OCI-LY7 (cell line): ENCODE measurements at regions of chr2 and their contacts with region 1.

Region 1: DNA sequence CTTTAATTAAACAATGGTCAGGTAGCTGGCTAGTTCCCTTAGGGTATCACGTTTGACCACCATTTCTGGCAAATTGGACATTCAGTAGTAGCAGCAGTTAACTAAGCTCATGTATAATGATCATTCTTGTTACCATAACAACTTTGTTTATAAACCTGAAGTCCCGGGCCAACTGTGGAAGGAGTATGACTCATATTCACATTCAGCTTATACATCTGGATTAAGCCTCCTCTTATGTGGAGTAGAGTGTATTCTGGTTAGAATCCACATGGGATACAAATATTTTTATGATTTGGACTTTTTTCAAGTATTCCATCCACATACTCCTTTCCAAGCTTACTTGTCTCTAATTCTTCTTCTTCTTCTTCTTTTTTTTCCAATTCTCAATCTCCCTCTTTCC is 70.3 kb upstream of the ZSWIM2 start:
- DNase-seq: no peak
- H3K4me3 ChIP-seq: no peak overlapping the region
- H3K27ac ChIP-seq: no peak overlapping the region
- H3K4me1 ChIP-seq: no peaks in the 10 kb centered on the region
- CTCF ChIP-seq: no peak

Region 2: GRCh38 chr2:186201371-186201770 is 717.9 kb before region 1 on chr2:
- CTCF ChIA-PET with region 1: no interaction called
- POLR2A ChIA-PET with region 1: no interaction called
- intact Hi-C with region 1: no loop called
- DNase-seq: no peak
- H3K4me3 ChIP-seq: no peak overlapping the region
- H3K27ac ChIP-seq: no peak overlapping the region
- H3K4me1 ChIP-seq: no peaks in the 10 kb centered on the region
- CTCF ChIP-seq: no peak

Region 3: DNA sequence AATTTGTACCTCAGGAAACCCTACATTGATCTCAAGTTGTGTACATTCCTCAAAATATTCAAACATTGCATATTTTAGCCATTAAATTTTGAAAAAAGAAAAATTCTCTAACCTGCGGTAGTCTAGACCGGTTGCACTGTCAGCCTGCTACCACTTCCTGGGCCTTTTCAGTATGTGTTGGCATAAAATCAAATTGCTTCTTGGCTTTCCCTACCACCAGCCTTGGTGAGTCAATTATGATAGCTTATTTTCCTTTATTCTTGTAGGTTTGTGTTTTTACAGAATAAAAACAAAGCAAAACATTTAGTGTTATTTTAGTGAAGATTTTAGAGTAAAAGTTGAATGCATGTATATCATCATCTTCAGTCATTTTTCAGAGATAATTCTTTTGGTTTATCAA is 164.2 kb before region 1 on chr2:
- CTCF ChIA-PET with region 1: no interaction called
- POLR2A ChIA-PET with region 1: no interaction called
- intact Hi-C with region 1: no loop called
- DNase-seq: no peak
- H3K4me3 ChIP-seq: no peak overlapping the region
- H3K27ac ChIP-seq: no peak overlapping the region
- H3K4me1 ChIP-seq: no peaks in the 10 kb centered on the region
- CTCF ChIP-seq: no peak

Region 4: DNA sequence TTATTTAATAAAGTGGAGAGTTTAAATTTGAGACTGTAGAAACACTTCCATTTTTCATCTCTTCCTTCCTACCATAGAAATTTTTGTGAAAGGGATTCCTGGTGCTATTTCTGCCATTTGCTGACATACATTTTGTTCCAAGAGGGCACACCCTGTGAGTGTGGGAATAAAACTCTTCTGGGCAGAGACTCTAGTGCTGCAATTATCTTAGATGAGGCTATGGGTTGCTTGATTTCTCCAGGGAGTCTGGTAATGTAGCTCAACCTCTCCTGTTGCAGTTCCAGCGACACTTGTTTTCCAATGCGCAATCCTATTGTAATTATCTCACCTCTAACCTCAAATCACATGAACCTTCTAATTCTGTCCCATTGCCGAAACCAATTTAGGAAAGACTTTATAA is 10.2 kb before region 1 on chr2:
- CTCF ChIA-PET with region 1: no interaction called
- POLR2A ChIA-PET with region 1: interaction called, 15 read pairs
- intact Hi-C with region 1: no loop called
- DNase-seq: no peak
- H3K4me3 ChIP-seq: no peak overlapping the region
- H3K27ac ChIP-seq: no peak overlapping the region
- H3K4me1 ChIP-seq: no peaks in the 10 kb centered on the region
- CTCF ChIP-seq: no peak